Aorta (tissue), 5 donors: ENCODE measurements at regions of chr1 and their contacts with region 1.

Region 1: GRCh38 chr1:55140546-55140983 is 74.6 kb downstream of the USP24 start:
- DNase-seq: peak in 1 of 2 donors; percentile 71
- ATAC-seq: peak; percentile 95
- H3K4me3 ChIP-seq: no peak overlapping the region
- H3K27ac ChIP-seq: no peak overlapping the region
- H3K4me1 ChIP-seq: no peaks in the 10 kb centered on the region
- H3K27me3 ChIP-seq: no peaks in the 10 kb centered on the region

Region 2: DNA sequence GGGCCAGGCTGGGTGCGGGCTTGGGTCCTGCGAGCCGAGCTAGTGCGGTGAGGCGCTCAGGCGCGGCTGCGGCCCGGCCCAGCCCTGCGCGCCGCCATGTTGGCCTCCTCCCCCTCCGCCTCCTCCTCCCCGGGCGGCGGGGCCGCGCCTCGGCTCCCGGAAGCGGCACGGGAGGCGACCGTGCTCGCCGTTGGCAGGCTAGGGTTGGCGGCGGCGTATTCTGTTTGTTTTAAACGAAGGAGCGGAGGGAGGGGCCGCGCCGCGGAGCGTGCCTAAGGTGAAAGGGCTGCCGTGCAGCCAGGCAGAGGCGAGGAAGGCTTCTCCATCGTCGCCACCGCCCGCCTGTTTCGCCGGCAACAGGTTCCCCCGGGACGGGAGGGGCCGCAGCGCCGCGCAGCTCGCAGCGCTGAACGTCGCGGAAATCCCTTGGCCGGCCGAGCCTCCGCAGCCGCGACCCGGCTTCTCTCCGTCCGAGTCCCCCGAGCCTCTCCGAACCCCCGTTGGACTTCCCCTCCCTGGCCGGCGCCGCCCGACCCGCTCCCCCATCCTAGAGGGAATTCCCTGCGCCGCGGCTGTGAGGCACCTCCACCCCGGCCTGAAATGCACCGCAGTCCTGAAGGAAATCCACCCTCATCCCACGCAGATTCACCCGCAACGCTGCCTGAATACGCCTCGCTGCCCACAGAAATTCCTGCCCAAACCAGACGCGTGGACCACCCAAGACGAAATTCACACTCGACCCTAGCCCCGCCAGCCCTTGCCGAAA is 74.9 kb after region 1 on chr1 and contains the start of gene USP24:
- intact Hi-C with region 1: loop called in 1 of 2 experiments (anchors 10 kb)
- DNase-seq: peak; percentile 82 to 92
- ATAC-seq: peak; percentile 94
- H3K4me3 ChIP-seq: peak within 1 kb of the TSS; percentile 89 to 94
- H3K27ac ChIP-seq: peak within 1 kb of the TSS; percentile 34 to 96
- H3K4me1 ChIP-seq: peaks cover 0 to 3% of the 10 kb centered on the region in 2 donors
- H3K27me3 ChIP-seq: no peaks in the 10 kb centered on the region
- total RNA-seq, gene USP24: 45.8 to 54.4 TPM

Region 3: DNA sequence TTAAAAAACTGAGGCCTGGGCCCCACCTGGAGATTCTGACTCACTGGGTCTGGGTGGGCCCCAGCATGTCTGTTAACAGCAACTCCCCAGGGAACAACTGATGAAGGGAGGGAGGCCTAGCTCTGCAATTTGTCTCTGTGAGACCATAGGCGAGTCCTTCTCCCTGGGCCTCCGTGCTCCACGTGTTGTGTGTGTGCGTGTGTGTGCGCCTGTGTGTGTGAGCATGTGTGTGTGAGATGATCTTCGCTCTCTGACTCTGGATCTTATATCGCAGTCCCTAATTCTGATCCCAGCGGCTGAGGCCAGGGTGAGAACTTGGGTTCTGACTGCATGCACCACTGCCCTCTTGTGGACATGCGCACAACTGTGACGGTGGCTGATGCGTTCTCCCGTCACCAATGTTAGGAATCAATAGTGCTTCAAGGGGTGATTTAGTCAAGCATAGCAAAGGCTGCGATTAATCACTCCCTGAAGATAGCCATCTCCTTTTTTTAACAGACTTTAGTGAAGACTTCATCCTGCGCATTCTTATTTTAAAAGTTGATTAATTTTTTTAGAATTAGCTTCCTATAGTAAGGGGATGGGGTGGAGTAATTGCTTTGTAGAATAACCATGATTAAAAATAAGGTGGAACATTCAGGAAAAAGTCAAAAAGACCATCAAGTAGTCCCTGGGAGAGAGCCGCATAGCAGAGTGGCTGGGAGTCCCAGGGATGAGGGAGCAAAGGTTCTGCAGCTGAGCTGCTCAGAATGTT is 137.0 kb after region 1 on chr1:
- intact Hi-C with region 1: loop called (anchors 1 to 2 kb)
- DNase-seq: peak; percentile 87 to 92
- ATAC-seq: peak; percentile 92
- H3K4me3 ChIP-seq: no peak overlapping the region
- H3K27ac ChIP-seq: no peak overlapping the region
- H3K4me1 ChIP-seq: no peaks in the 10 kb centered on the region
- H3K27me3 ChIP-seq: no peaks in the 10 kb centered on the region